MCF 10A (cell line): ENCODE measurements at regions of chr7 and their contacts with region 1.

Region 1: GRCh38 chr7:36291387-36292316 is 98.0 kb upstream of the ANLN start:
- DNase-seq: peak; percentile 80
- H3K4me3 Mint-ChIP-seq: peak overlapping the region; percentile 23
- H3K27ac Mint-ChIP-seq: peak overlapping the region; percentile 81
- H3K4me1 Mint-ChIP-seq: peaks cover 31% of the 10 kb centered on the region
- H3K27me3 Mint-ChIP-seq: peaks cover 20% of the 10 kb centered on the region
- CTCF ChIP-seq: peak; percentile 91

Region 2: GRCh38 chr7:35336444-35336843 is 955.2 kb before region 1 on chr7:
- CTCF ChIA-PET with region 1: no interaction called
- POLR2A ChIA-PET with region 1: no interaction called
- intact Hi-C with region 1: no loop called
- DNase-seq: no peak
- H3K4me3 Mint-ChIP-seq: no peak overlapping the region
- H3K27ac Mint-ChIP-seq: no peak overlapping the region
- H3K4me1 Mint-ChIP-seq: no peaks in the 10 kb centered on the region
- H3K27me3 Mint-ChIP-seq: peaks cover 1% of the 10 kb centered on the region
- CTCF ChIP-seq: no peak

Region 3: DNA sequence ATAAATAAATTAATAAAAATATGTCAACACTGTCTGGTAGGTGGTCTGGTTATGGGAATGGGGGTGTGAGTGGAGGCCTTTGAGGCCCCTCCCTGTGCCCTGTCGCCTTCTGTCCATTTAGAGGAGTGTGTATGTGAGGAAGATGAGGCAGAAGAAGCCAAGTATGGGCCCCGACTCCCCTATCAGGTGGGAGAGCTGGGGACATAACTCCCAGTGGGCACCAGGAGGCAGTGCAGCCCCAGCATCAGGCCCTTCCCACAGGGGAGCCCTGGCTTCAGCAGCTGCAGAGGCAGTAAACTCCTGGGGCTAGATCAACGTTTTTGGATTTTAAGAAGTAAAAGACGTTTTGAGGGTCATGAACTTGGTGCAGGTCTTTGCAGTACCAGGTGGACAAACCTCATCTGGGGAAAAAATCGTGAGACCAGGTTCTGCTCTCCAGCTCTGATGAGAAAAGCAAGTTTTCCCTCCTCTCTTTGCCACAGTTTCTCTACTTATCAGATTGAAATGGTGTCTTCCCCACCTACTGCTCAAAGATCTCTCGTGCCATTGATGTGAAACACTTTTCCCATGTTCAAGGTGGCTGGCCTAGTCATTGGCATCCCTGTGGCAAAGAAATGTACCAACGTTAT is 306.4 kb before region 1 on chr7:
- CTCF ChIA-PET with region 1: interaction called, 147 read pairs
- POLR2A ChIA-PET with region 1: interaction called, 21 read pairs
- intact Hi-C with region 1: loop called (anchors 1 kb)
- DNase-seq: peak; percentile 71
- H3K4me3 Mint-ChIP-seq: no peak overlapping the region
- H3K27ac Mint-ChIP-seq: no peak overlapping the region
- H3K4me1 Mint-ChIP-seq: no peaks in the 10 kb centered on the region
- H3K27me3 Mint-ChIP-seq: no peaks in the 10 kb centered on the region
- CTCF ChIP-seq: peak; percentile 94

Region 4: DNA sequence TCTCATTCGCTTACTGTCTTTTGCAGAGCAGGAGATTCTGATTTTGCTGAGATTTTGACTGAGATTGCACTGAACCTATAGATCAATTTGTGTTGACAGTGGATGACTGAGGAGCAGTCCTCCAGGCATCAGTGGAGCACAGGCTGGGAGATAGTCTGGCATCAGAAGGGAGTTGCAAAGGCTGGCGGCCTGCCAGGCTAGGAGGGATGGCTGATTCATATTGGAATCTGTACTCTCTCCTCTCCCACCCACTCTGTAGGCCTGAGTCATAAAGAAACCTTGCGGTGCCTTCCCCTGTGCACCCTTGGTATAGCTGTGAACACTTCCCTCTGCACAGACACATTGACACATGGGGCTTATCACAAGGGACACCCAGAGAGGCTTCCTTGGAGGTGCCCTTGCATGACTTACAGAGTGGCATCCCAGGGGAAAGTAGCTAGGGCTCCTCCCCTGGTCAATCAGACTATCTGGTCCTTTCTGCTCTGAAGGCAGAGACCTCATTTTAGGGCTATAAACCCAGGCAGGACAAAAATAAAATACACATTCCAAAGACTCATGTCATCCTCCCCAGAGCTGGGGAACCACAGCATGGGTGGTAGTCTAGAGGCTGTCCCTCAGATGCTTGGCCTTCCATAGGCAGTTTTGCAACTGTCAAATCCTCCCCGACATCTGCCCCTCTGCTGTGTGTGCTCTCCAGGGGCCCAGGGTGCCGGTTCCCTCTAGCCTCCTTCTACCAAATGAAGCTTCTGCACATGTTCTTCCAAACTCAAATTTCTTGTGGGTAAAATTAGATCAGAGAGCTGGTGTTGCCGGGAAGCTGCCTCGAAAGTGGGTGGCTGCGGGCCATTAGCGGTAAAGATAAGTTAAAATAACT is 176.0 kb before region 1 on chr7:
- CTCF ChIA-PET with region 1: interaction called, 8 read pairs
- POLR2A ChIA-PET with region 1: interaction called, 4 read pairs
- intact Hi-C with region 1: loop called (anchors 5 kb)
- DNase-seq: peak; percentile 99
- H3K4me3 Mint-ChIP-seq: peak overlapping the region; percentile 49
- H3K27ac Mint-ChIP-seq: peak overlapping the region; percentile 93
- H3K4me1 Mint-ChIP-seq: peaks cover 49% of the 10 kb centered on the region
- H3K27me3 Mint-ChIP-seq: no peaks in the 10 kb centered on the region
- CTCF ChIP-seq: no peak

Region 5: GRCh38 chr7:36303202-36304098 is 11.8 kb after region 1 on chr7:
- CTCF ChIA-PET with region 1: interaction called, 24 read pairs
- POLR2A ChIA-PET with region 1: interaction called, 4 read pairs
- intact Hi-C with region 1: no loop called
- DNase-seq: peak; percentile 99
- H3K4me3 Mint-ChIP-seq: peak overlapping the region; percentile 47
- H3K27ac Mint-ChIP-seq: peak overlapping the region; percentile 39
- H3K4me1 Mint-ChIP-seq: peaks cover 20% of the 10 kb centered on the region
- H3K27me3 Mint-ChIP-seq: no peaks in the 10 kb centered on the region
- CTCF ChIP-seq: no peak

Region 6: GRCh38 chr7:36535866-36536664 is 244.4 kb after region 1 on chr7:
- CTCF ChIA-PET with region 1: no interaction called
- POLR2A ChIA-PET with region 1: no interaction called
- intact Hi-C with region 1: no loop called
- DNase-seq: peak; percentile 71
- H3K4me3 Mint-ChIP-seq: no peak overlapping the region
- H3K27ac Mint-ChIP-seq: no peak overlapping the region
- H3K4me1 Mint-ChIP-seq: no peaks in the 10 kb centered on the region
- H3K27me3 Mint-ChIP-seq: no peaks in the 10 kb centered on the region
- CTCF ChIP-seq: no peak

Region 7: GRCh38 chr7:36690514-36691187 is 399.0 kb after region 1 on chr7:
- CTCF ChIA-PET with region 1: no interaction called
- POLR2A ChIA-PET with region 1: no interaction called
- intact Hi-C with region 1: no loop called
- DNase-seq: no peak
- H3K4me3 Mint-ChIP-seq: no peak overlapping the region
- H3K27ac Mint-ChIP-seq: no peak overlapping the region
- H3K4me1 Mint-ChIP-seq: peaks cover 7% of the 10 kb centered on the region
- H3K27me3 Mint-ChIP-seq: no peaks in the 10 kb centered on the region
- CTCF ChIP-seq: no peak